HCT116 (cell line): ENCODE measurements at regions of chr4 and their contacts with region 1.

Region 1: DNA sequence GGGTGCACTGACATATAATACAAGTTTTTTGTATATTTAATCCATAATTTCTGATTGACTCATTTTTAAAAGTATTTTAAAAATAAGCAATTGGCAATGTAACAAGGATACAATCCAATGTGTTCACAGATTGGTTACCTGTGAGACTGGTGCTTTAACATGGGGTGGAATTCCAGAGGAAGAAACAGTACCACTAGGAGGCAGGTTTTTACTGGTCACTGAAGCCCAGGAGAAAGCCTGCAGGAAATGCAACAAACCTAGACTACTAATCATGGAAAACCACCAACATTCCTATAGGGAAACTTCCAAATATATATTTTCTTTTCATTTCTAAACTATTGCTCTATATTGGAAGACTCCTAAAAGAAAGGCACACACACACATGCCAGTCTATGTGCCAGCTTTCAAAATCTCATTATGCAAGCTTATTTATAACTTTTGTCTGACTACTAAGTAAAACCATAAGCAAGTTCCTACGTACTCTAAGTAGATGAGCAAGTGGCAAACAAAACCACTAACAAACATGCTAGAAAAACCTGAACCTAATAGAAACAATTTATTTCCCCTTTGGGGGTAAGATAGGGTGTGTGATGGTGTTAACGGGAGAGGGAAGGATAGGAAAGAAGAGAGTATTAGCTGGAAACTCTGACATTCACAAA is 19.2 kb downstream of the G3BP2 start:
- DNase-seq: no peak
- ATAC-seq: peak; percentile 78
- H3K4me3 ChIP-seq: no peak overlapping the region
- H3K27ac ChIP-seq: no peak overlapping the region
- H3K4me1 ChIP-seq: peaks cover 0 to 2% of the 10 kb centered on the region in 2 experiments; a peak in 1 of 4 replicates
- H3K27me3 ChIP-seq: no peaks in the 10 kb centered on the region
- CTCF ChIP-seq: peak; percentile 43 to 62 (median 52); a peak in 5 of 6 replicates
- POLR2A ChIP-seq: no peak
- RAD21 ChIP-seq: peak; percentile 52

Region 2: GRCh38 chr4:75724066-75724866 is 70.3 kb after region 1 on chr4 and contains the start of gene USO1:
- CTCF ChIA-PET with region 1: interaction called, 7 read pairs
- POLR2A ChIA-PET with region 1: no interaction called
- RAD21 ChIA-PET with region 1: no interaction called
- intact Hi-C with region 1: loop called (anchors 1 kb)
- DNase-seq: peak; percentile 97
- ATAC-seq: peak; percentile 92
- H3K4me3 ChIP-seq: peak within 1 kb of the TSS; percentile 89 to 99
- H3K27ac ChIP-seq: peak within 1 kb of the TSS; percentile 80
- H3K4me1 ChIP-seq: peaks cover 7 to 18% of the 10 kb centered on the region in 2 experiments
- H3K27me3 ChIP-seq: no peaks in the 10 kb centered on the region
- CTCF ChIP-seq: peak; percentile 80 to 86 (median 84); a peak in 5 of 6 replicates
- POLR2A ChIP-seq: peak; percentile 88
- RAD21 ChIP-seq: peak; percentile 69
- total RNA-seq, gene USO1: 72.7 TPM

Region 3: GRCh38 chr4:75844151-75844662 is 190.2 kb after region 1 on chr4:
- CTCF ChIA-PET with region 1: interaction called, 7 read pairs
- POLR2A ChIA-PET with region 1: no interaction called
- RAD21 ChIA-PET with region 1: interaction called in 1 of 2 experiments, 3 read pairs
- intact Hi-C with region 1: loop called (anchors 10 kb)
- DNase-seq: no peak
- ATAC-seq: no peak
- H3K4me3 ChIP-seq: no peak overlapping the region
- H3K27ac ChIP-seq: no peak overlapping the region
- H3K4me1 ChIP-seq: peaks cover 0 to 21% of the 10 kb centered on the region in 2 experiments; a peak in 2 of 4 replicates
- H3K27me3 ChIP-seq: no peaks in the 10 kb centered on the region
- CTCF ChIP-seq: no peak
- POLR2A ChIP-seq: no peak
- RAD21 ChIP-seq: no peak